ENCODE measurements at regions of chr12 and their contacts with region 1.

Region 1: GRCh38 chr12:40010899-40011774 is 94.7 kb downstream of the SLC2A13 start:
- DNase-seq: peak; percentile 52 to 72 (median 56)
- ATAC-seq: peak; percentile 86
- H3K4me3 ChIP-seq: no peak overlapping the region
- H3K27ac ChIP-seq: no peak overlapping the region
- H3K4me1 ChIP-seq: peaks cover 11% of the 10 kb centered on the region
- H3K27me3 ChIP-seq: no peaks in the 10 kb centered on the region
- CTCF ChIP-seq: peak; percentile 58 to 77 (median 70)
- POLR2A ChIP-seq: no peak

Region 2: DNA sequence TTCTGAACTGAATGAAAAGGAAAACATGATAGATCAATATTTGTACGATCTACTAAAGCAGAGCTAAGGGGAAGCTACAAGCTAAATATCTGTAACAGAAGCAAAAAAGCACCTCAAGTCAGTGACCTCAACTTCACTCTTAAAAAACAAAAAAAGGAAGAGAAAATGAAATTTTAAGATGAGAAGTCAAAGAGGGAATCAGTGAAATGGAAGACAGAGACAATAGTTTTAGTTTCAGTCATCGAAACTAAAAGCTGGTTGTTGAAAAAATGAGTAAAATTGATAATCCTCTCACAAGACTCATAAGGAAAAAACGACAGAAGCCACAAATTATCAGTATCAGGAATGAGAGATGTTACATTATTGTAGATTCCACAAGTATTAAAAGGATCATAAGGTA is 106.7 kb after region 1 on chr12:
- intact Hi-C with region 1: loop called (anchors 10 kb)
- DNase-seq: no peak
- ATAC-seq: no peak
- H3K4me3 ChIP-seq: no peak overlapping the region
- H3K27ac ChIP-seq: no peak overlapping the region
- H3K4me1 ChIP-seq: no peaks in the 10 kb centered on the region
- H3K27me3 ChIP-seq: no peaks in the 10 kb centered on the region
- CTCF ChIP-seq: no peak
- POLR2A ChIP-seq: no peak

Region 3: DNA sequence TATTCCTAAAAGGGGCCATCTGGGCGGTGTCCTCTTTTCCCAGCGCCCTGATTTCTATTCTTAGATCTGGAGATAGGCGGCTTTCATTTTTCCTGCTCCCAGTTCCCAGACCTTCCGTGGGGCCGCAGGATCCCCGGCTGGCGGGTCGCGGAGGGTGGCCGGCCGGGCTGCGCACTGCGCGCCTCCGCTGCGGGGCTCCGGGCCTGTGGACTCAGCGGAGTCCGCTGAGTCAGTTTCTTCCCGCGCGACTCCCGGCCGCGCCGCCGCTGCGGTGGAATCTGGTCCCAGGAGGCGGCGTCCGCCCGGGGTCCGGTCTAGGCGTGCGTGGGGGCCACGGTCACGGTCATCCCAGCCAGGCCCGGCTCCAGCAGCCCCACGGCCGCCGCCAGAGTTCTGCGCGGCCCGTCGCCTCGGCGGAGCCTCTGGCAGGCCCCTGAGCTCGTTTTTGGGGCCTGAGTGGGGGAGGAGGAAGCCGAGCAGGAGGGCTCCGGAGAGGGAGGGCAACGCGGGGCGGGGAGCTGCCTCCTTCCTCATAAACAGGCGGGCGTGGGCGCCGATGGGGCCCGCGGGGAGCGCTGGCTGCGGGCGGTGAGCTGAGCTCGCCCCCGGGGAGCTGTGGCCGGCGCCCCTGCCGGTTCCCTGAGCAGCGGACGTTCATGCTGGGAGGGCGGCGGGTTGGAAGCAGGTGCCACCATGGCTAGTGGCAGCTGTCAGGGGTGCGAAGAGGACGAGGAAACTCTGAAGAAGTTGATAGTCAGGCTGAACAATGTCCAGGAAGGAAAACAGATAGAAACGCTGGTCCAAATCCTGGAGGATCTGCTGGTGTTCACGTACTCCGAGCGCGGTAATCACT is 213.5 kb after region 1 on chr12 and contains the start of gene LRRK2:
- intact Hi-C with region 1: no loop called
- DNase-seq: peak; percentile 73 to 86 (median 81)
- ATAC-seq: peak; percentile 86
- H3K4me3 ChIP-seq: peak within 1 kb of the TSS; percentile 32 to 87
- H3K27ac ChIP-seq: peak within 1 kb of the TSS; percentile 87 to 97 (median 94)
- H3K4me1 ChIP-seq: peaks cover 20% of the 10 kb centered on the region
- H3K27me3 ChIP-seq: no peaks in the 10 kb centered on the region
- CTCF ChIP-seq: peak in 1 of 7 experiments; percentile 7
- POLR2A ChIP-seq: peak; percentile 73 to 88 (median 85)
- total RNA-seq, gene LRRK2: 8.2 to 13.7 TPM

Region 4: GRCh38 chr12:40515041-40515816 is 504.1 kb after region 1 on chr12:
- intact Hi-C with region 1: no loop called
- DNase-seq: no peak
- ATAC-seq: no peak
- H3K4me3 ChIP-seq: no peak overlapping the region
- H3K27ac ChIP-seq: no peak overlapping the region
- H3K4me1 ChIP-seq: no peaks in the 10 kb centered on the region
- H3K27me3 ChIP-seq: no peaks in the 10 kb centered on the region
- CTCF ChIP-seq: no peak
- POLR2A ChIP-seq: no peak

Measured in body of pancreas (tissue), 4 donors.